A673 (cell line): ENCODE measurements at regions of chr16 and their contacts with region 1.

Region 1: GRCh38 chr16:23182460-23183309 is at the start of gene SCNN1G:
- DNase-seq: peak; percentile 88
- H3K4me3 ChIP-seq: peak within 1 kb of the TSS; percentile 69
- H3K27ac ChIP-seq: peak within 1 kb of the TSS; percentile 74
- H3K4me1 ChIP-seq: peaks cover 6% of the 10 kb centered on the region
- H3K27me3 ChIP-seq: no peaks in the 10 kb centered on the region
- CTCF ChIP-seq: peak; percentile 78
- total RNA-seq, gene SCNN1G: 15.6 and 22.3 TPM in 2 replicates

Region 2: GRCh38 chr16:23248261-23249194 is 65.8 kb after region 1 on chr16:
- CTCF ChIA-PET with region 1: no interaction called
- POLR2A ChIA-PET with region 1: no interaction called
- intact Hi-C with region 1: loop called (anchors 10 kb)
- DNase-seq: no peak
- H3K4me3 ChIP-seq: no peak overlapping the region
- H3K27ac ChIP-seq: no peak overlapping the region
- H3K4me1 ChIP-seq: no peaks in the 10 kb centered on the region
- H3K27me3 ChIP-seq: no peaks in the 10 kb centered on the region
- CTCF ChIP-seq: no peak

Region 3: DNA sequence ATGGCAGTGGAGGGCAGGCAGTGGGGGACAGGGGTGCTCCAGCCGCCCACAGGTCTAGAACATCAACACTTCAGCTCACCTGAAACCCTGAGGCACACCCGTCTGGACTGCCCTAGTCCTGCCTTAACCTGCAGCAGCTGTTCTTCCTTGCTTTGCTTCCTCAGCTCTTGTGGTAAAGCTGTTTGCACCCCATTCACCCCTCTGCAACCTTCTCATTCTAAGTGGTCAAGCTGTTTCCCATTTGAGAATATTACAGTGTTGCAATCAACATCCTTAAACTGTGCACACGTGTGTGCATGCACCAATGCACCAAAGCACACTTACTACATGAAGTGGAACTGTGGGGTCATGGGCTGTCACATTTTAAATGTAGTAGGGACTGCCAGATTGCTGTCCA is 151.8 kb after region 1 on chr16:
- CTCF ChIA-PET with region 1: no interaction called
- POLR2A ChIA-PET with region 1: no interaction called
- intact Hi-C with region 1: loop called (anchors 5 kb)
- DNase-seq: no peak
- H3K4me3 ChIP-seq: no peak overlapping the region
- H3K27ac ChIP-seq: peak overlapping the region; percentile 61
- H3K4me1 ChIP-seq: peaks cover 6% of the 10 kb centered on the region
- H3K27me3 ChIP-seq: no peaks in the 10 kb centered on the region
- CTCF ChIP-seq: no peak